Ascending aorta (tissue), 2 donors: ENCODE measurements at regions of chr1 and their contacts with region 1.

Region 1: GRCh38 chr1:156920233-156921052 is at the start of gene LRRC71:
- DNase-seq: peak in 1 of 2 donors; percentile 81
- H3K4me3 ChIP-seq: peak within 1 kb of the TSS; percentile 16
- H3K27ac ChIP-seq: no peak within 1 kb of the TSS
- H3K4me1 ChIP-seq: peaks cover 4 to 9% of the 10 kb centered on the region in 2 donors
- H3K27me3 ChIP-seq: peaks cover 28% of the 10 kb centered on the region
- CTCF ChIP-seq: peak; percentile 69 to 80 (median 77)
- total RNA-seq, gene LRRC71: not detected

Region 2: DNA sequence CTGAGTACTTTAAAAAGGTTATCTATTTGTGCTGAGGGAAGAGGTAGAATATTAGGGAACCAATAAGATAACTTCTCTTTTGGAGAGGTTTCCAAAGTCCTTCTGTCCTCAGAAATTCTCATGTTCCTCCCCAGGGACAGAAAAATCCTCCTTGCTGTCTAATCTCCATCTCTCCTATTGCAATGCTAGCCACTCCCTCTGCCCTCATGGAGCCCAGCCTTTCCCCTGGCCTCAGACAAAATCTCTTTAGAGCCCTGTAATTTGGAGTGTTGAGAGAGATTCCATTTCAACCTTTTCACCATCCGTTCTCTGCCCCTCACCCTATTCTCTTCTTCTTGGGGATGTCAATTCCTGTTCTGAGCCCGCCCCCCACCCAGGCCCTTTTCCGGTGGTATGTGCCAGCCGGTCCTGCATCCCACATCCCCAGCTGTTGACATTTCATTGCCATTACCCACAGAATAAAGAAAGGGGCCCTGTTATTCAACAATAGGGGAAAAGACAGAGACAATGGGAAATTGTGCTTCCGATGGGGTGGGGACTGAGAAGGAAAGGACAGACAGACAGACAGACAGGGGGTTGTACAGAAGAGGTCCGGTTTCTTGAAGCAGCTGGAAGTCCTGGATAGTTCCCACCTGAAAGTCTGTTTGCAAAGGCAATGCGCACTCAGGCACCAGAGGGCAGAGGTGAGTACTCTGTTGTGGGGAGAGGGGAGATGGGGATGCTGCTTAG is 301.4 kb before region 1 on chr1 and contains the start of gene HAPLN2:
- intact Hi-C with region 1: no loop called
- DNase-seq: no peak
- H3K4me3 ChIP-seq: no peak within 1 kb of the TSS
- H3K27ac ChIP-seq: no peak within 1 kb of the TSS
- H3K4me1 ChIP-seq: peaks cover 4 to 5% of the 10 kb centered on the region in 2 donors
- H3K27me3 ChIP-seq: peaks cover 8% of the 10 kb centered on the region
- CTCF ChIP-seq: peak in 1 of 3 experiments; percentile 13
- total RNA-seq, gene HAPLN2: 1.4 TPM

Region 3: DNA sequence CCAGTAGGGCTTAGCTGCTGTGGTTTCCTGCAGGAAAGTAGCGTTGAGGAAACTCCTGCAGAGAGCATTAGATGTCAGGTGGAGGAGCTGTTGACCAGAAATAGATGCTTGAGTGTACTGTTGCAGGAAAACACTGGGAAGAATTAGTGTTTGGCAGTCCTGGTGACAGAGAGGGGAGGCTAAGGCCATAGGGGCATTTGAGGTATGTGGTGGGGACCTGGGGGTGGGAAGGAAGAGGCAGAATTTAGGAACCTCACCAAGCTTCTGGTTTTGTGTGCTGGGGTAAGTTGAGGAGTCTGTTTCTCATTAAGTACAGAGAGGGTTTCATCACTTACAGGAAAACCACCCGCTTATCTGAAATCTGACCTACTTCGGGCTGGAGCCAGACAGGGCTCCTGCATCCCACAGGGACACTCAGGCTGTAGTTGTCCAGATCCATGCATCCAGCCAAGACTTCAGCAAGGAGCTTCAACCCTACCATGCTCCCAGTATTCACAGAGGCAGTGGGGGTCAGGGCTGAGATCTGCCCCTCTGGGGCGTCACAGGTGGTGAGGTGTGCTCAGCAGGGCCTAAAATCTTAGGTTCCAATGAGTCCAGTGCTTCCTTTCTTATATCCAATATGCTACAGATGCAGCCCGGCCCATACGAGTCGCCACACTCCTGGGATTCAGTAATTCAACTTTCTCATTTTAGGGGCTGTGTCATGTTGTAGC is 118.9 kb before region 1 on chr1:
- intact Hi-C with region 1: no loop called
- DNase-seq: no peak
- H3K4me3 ChIP-seq: no peak overlapping the region
- H3K27ac ChIP-seq: no peak overlapping the region
- H3K4me1 ChIP-seq: no peaks in the 10 kb centered on the region
- H3K27me3 ChIP-seq: no peaks in the 10 kb centered on the region
- CTCF ChIP-seq: no peak

Region 4: GRCh38 chr1:156823210-156823790 is 97.1 kb before region 1 on chr1:
- intact Hi-C with region 1: no loop called
- DNase-seq: no peak
- H3K4me3 ChIP-seq: no peak overlapping the region
- H3K27ac ChIP-seq: no peak overlapping the region
- H3K4me1 ChIP-seq: no peaks in the 10 kb centered on the region
- H3K27me3 ChIP-seq: no peaks in the 10 kb centered on the region
- CTCF ChIP-seq: no peak

Region 5: DNA sequence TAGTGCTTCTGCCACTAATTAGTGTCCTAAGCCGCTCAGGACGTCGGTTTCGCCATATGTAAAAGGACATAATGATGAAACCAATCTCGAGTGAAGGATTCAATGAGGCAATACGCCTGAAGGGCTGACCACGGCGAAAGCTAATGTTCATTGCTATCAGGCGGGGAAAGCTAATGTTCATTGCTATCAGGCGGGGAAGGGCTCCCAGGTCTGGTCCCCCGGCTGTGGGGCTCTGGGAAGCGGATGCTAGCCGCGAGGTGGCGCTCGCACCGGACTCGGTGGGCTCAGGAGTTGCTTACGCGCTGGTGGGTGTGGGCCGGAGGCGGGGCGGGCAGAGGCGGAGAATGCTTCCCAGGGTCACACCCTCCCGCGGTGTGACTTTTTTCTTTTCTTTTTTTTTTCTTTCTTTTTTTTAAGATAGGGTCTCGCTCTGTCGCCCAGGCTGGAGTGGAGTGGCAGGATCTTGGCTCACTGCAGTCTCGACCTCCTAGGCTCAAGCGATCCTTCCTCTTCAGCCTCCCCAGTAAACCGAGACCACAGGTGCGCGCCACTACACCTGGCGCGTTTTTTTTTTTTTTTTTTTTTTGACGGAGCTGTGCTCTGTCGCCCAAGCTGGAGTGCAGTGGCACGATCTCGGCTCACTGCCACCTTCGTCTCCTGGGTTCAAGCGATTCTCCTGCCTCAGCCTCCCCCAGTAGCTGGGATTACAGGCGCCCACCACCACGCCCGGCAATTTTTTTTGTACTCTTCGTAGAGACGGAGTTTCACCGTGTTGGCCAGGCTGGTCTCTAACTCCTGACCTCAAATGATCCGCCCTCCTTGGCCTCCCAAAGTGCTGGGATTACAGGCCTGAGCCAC is 28.0 kb before region 1 on chr1:
- intact Hi-C with region 1: loop called (anchors 2 kb)
- DNase-seq: peak; percentile 36 to 92
- H3K4me3 ChIP-seq: peak overlapping the region; percentile 31 to 70
- H3K27ac ChIP-seq: peak overlapping the region; percentile 92 to 94
- H3K4me1 ChIP-seq: peaks cover 6 to 16% of the 10 kb centered on the region in 2 donors
- H3K27me3 ChIP-seq: no peaks in the 10 kb centered on the region
- CTCF ChIP-seq: peak; percentile 75 to 84 (median 77)

Region 6: GRCh38 chr1:157562515-157562914 is 642.1 kb after region 1 on chr1:
- intact Hi-C with region 1: no loop called
- DNase-seq: no peak
- H3K4me3 ChIP-seq: no peak overlapping the region
- H3K27ac ChIP-seq: no peak overlapping the region
- H3K4me1 ChIP-seq: no peaks in the 10 kb centered on the region
- H3K27me3 ChIP-seq: no peaks in the 10 kb centered on the region
- CTCF ChIP-seq: no peak